PC-9 (cell line): ENCODE measurements at regions of chr1 and their contacts with region 1.

Region 1: GRCh38 chr1:12132092-12132491 is 34.7 kb upstream of the TNFRSF1B start:
- DNase-seq: peak; percentile 89 to 96
- H3K4me3 ChIP-seq: no peak overlapping the region
- H3K27ac ChIP-seq: peak overlapping the region; percentile 97
- H3K4me1 ChIP-seq: peaks cover 20% of the 10 kb centered on the region
- H3K27me3 ChIP-seq: no peaks in the 10 kb centered on the region
- CTCF ChIP-seq: no peak

Region 2: DNA sequence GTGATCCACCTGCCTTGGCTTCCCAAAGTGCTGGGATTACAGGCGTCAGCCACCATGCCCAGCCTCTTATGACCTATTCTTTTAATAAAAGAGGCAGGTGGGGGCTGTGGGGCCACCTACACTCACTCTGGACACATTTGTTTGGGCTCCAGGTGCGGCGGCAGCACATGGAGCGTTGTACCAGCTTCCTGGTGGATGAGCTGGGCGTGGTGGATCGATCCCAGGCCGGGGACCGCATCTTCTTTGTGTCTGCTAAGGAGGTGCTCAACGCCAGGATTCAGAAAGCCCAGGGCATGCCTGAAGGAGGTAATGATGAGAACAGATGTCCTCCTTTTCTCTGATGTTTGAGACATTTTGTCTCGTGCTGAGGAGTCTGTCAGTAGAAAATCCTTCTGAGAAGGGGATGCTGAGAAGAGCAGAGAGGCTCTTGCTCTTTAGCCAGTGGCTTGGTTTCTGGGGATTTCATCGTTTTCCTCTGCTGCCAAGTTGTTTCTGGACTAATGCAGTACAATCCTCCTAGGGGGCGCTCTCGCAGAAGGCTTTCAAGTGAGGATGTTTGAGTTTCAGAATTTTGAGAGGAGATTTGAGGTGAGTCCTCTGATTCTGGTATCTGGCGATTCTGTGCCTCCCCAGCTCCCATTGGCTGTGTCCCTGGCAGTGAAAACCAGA is 130.7 kb before region 1 on chr1:
- CTCF ChIA-PET with region 1: no interaction called
- POLR2A ChIA-PET with region 1: no interaction called
- intact Hi-C with region 1: no loop called
- DNase-seq: no peak
- H3K4me3 ChIP-seq: no peak overlapping the region
- H3K27ac ChIP-seq: peak overlapping the region; percentile 39; the same call in 1 of the 2 replicates
- H3K4me1 ChIP-seq: no peaks in the 10 kb centered on the region
- H3K27me3 ChIP-seq: no peaks in the 10 kb centered on the region
- CTCF ChIP-seq: peak; percentile 56

Region 3: GRCh38 chr1:12143631-12144155 is 11.6 kb after region 1 on chr1:
- CTCF ChIA-PET with region 1: no interaction called
- POLR2A ChIA-PET with region 1: no interaction called
- intact Hi-C with region 1: loop called (anchors 1 kb)
- DNase-seq: peak; percentile 72 to 91
- H3K4me3 ChIP-seq: no peak overlapping the region
- H3K27ac ChIP-seq: peak overlapping the region; percentile 76
- H3K4me1 ChIP-seq: peaks cover 37% of the 10 kb centered on the region
- H3K27me3 ChIP-seq: no peaks in the 10 kb centered on the region
- CTCF ChIP-seq: no peak

Region 4: GRCh38 chr1:12161662-12162458 is 29.8 kb after region 1 on chr1:
- CTCF ChIA-PET with region 1: no interaction called
- POLR2A ChIA-PET with region 1: no interaction called
- intact Hi-C with region 1: loop called (anchors 2 kb)
- DNase-seq: peak; percentile 84 to 89
- H3K4me3 ChIP-seq: no peak overlapping the region
- H3K27ac ChIP-seq: peak overlapping the region; percentile 47; the same call in 1 of the 2 replicates
- H3K4me1 ChIP-seq: peaks cover 59% of the 10 kb centered on the region
- H3K27me3 ChIP-seq: no peaks in the 10 kb centered on the region
- CTCF ChIP-seq: no peak

Region 5: DNA sequence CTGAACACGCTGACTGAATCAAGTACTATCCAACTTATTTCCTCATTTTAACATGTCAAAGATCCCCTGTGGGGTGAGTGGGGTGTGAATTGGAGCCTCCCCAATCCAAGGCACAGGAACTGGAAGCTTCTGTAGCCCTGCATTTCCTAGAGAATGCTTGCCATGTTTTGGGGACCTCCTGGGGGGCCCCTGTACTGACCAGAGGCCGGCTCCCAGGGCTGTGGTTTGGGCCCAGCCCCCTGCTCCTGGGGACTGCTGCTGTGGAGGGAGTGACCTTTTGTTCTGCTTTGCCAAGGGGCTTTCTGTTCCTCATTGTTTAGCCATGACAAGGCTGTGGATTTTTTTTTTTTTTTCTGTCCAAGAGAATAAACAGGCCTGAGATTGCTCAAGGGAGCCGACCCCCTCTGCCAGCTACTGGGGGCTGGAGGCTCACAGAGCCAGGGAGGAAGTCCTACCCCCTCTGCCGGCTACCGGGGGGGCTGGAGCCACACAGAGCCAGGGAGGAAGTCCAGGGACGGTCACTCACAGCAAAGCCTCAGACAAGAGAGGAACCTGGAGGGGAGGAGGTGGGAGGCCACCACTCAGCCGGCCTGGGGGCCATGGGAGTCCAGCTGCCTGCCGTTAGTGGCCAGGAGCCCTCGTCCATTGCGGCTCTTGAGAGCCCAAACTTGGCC is 52.1 kb after region 1 on chr1:
- CTCF ChIA-PET with region 1: no interaction called
- POLR2A ChIA-PET with region 1: no interaction called
- intact Hi-C with region 1: loop called (anchors 2 kb)
- DNase-seq: peak; percentile 50
- H3K4me3 ChIP-seq: no peak overlapping the region
- H3K27ac ChIP-seq: no peak overlapping the region
- H3K4me1 ChIP-seq: peaks cover 10% of the 10 kb centered on the region
- H3K27me3 ChIP-seq: no peaks in the 10 kb centered on the region
- CTCF ChIP-seq: no peak

Region 6: DNA sequence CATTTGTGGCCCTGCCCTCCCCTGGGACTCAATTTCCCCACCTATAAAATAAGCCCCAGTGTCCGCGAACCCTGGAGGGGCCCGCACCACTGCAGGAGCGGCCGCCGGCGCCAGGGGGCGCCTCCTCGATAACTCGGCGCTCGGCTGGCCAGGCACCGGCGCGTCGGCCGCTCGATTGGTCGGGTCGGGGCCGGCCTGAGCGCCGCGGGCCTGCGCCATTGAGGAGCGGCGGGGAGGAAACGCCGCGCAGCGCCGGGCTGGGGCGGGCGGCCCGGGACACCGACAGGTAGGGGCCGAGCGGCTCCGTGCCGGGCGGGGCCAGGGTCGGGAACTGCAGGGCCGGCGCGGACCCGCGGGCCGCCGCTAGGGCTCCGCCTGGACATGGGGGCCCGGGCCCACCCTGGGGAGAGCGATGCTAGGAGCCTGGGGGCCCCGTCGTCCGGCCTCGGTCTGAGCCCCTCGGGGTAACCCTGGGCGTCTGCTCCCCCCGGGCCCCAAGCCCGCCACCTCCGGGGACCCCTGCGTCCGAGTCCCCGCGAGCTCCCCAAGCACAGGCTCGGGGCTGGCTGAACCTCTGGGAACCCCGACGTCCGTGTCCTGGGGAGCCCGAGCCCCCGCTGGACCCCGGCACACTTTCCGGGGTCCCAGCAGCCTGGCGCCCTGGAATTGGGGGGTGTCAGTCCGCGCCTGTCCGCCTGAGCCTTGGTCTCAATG is 97.9 kb after region 1 on chr1 and contains the start of gene VPS13D:
- CTCF ChIA-PET with region 1: no interaction called
- POLR2A ChIA-PET with region 1: no interaction called
- intact Hi-C with region 1: no loop called
- DNase-seq: peak; percentile 40 to 74
- H3K4me3 ChIP-seq: peak within 1 kb of the TSS; percentile 69
- H3K27ac ChIP-seq: peak within 1 kb of the TSS; percentile 29; the same call in 1 of the 2 replicates
- H3K4me1 ChIP-seq: peaks cover 11% of the 10 kb centered on the region; the same call in 1 of the 2 replicates
- H3K27me3 ChIP-seq: no peaks in the 10 kb centered on the region
- CTCF ChIP-seq: peak; percentile 72
- total RNA-seq, gene VPS13D: 31.1 and 36.2 TPM in 2 replicates

Region 7: GRCh38 chr1:12486401-12487005 is 354.4 kb after region 1 on chr1:
- CTCF ChIA-PET with region 1: no interaction called
- POLR2A ChIA-PET with region 1: no interaction called
- intact Hi-C with region 1: loop called (anchors 5 kb)
- DNase-seq: peak; percentile 80 to 88
- H3K4me3 ChIP-seq: no peak overlapping the region
- H3K27ac ChIP-seq: peak overlapping the region; percentile 87
- H3K4me1 ChIP-seq: peaks cover 83% of the 10 kb centered on the region
- H3K27me3 ChIP-seq: no peaks in the 10 kb centered on the region
- CTCF ChIP-seq: no peak